ENCODE measurements at regions of chr12 and their contacts with region 1.

Region 1: DNA sequence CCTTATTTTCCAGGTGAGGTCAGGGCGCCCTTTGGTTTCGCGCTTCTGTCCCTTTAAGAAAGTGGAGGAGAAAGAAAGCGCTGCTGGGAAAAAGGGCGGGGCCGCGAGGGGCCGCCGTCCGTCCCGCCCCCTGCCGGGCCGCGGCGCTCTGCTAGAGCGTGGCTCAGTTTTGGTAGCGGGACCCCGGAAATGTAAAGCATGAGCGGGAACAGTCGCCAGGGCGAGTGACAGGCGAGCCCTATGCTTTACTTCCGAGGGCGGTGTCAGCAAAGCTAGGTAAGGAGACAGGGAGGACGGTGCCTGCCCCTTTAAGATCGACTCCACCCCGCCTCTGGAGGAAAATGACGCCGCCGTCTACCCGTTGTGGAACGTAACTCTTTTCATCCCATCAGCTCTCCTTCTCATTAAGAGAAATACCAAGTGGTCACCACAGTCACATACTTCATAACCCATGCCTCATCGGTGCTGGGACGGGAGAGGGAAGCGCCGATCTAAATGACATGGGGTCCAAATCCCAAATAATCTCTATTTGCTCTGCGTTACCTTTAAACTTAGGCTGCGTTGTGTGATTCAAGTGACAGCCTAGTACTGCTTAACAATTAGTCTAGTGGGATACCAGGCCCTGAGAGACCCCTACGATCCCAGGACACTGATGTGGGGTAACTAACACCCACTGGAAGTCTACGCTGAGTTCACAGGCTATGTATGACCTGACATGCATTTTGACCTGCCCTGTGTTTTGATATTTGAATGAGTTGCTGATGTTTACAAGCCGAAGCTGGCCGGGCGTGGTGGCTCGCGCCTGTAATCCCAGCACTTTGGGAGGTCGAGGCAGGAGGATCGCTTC is at the start of gene ETFBKMT:
- DNase-seq: peak; percentile 95
- H3K4me3 Mint-ChIP-seq: peak within 1 kb of the TSS; percentile 94
- H3K27ac Mint-ChIP-seq: peak within 1 kb of the TSS; percentile 97
- H3K4me1 Mint-ChIP-seq: peaks cover 11% of the 10 kb centered on the region
- H3K27me3 Mint-ChIP-seq: no peaks in the 10 kb centered on the region
- total RNA-seq, gene ETFBKMT: 0.62 and 0.69 TPM in 2 replicates

Region 2: DNA sequence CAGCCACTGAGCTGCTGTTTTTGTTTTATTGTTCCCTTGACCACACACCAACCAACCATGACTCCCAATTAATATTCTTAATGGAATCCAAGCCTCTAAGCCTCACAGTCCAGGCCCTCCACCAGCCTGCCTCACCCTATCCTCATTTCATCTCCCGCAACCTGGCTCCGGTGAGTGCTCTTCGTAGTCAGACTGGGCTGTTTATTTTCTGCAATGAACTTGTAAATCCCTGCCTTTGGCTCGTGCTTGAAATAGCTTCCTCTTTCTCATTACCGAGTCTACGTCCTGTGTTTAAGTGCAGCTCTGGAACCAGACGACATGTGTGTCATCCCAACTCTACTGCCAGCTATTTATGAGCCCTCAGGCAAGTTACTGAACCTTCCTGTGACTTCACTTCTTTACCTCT is 12.2 kb before region 1 on chr12:
- intact Hi-C with region 1: no loop called
- DNase-seq: no peak
- H3K4me3 Mint-ChIP-seq: no peak overlapping the region
- H3K27ac Mint-ChIP-seq: no peak overlapping the region
- H3K4me1 Mint-ChIP-seq: no peaks in the 10 kb centered on the region
- H3K27me3 Mint-ChIP-seq: peaks cover 2% of the 10 kb centered on the region

Region 3: GRCh38 chr12:31736472-31736871 is 77.2 kb after region 1 on chr12:
- intact Hi-C with region 1: no loop called
- DNase-seq: peak; percentile 67
- H3K4me3 Mint-ChIP-seq: no peak overlapping the region
- H3K27ac Mint-ChIP-seq: peak overlapping the region; percentile 84
- H3K4me1 Mint-ChIP-seq: peaks cover 54% of the 10 kb centered on the region
- H3K27me3 Mint-ChIP-seq: no peaks in the 10 kb centered on the region

Region 4: DNA sequence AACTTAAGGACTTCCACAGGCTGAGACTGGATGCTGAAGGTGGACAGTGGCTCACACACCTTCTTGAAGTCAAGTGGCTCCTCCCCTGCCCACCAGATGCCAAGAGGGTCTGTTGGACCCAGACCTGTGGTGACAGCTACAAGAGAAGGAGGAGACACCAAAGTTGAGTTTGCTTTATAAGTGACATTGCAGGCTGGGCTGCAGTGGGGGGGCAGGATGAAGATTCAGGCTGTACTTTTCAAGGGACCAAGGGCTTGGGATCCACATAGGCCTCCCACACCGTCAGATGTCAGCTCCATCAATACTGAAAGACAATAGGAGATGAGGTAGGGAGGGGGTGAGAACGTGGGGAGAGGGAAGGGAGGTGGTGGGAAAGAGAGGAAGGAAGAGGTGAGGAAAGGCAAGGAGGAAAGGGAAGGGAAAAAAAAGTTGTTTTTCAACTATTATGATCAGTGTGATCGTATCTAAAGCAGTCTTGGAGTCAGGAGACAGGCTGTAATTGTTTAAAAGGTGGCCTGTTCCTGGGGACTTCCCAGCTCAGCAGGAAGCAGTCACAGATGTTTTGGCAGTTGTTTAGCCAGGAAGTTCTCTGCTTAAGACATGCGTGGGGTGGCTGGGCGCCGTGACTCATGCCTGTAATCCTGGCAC is 215.8 kb after region 1 on chr12:
- intact Hi-C with region 1: loop called (anchors 1 kb)
- DNase-seq: peak; percentile 68
- H3K4me3 Mint-ChIP-seq: peak overlapping the region; percentile 80
- H3K27ac Mint-ChIP-seq: peak overlapping the region; percentile 100
- H3K4me1 Mint-ChIP-seq: peaks cover 30% of the 10 kb centered on the region
- H3K27me3 Mint-ChIP-seq: no peaks in the 10 kb centered on the region

Region 5: GRCh38 chr12:32106517-32107358 is 447.4 kb after region 1 on chr12 and contains the start of gene BICD1:
- intact Hi-C with region 1: loop called (anchors 1 kb)
- DNase-seq: peak; percentile 76
- H3K4me3 Mint-ChIP-seq: peak within 1 kb of the TSS; percentile 98
- H3K27ac Mint-ChIP-seq: peak within 1 kb of the TSS; percentile 87
- H3K4me1 Mint-ChIP-seq: peaks cover 36% of the 10 kb centered on the region
- H3K27me3 Mint-ChIP-seq: peaks cover 19% of the 10 kb centered on the region
- total RNA-seq, gene BICD1: 20.9 and 22.2 TPM in 2 replicates

Region 6: DNA sequence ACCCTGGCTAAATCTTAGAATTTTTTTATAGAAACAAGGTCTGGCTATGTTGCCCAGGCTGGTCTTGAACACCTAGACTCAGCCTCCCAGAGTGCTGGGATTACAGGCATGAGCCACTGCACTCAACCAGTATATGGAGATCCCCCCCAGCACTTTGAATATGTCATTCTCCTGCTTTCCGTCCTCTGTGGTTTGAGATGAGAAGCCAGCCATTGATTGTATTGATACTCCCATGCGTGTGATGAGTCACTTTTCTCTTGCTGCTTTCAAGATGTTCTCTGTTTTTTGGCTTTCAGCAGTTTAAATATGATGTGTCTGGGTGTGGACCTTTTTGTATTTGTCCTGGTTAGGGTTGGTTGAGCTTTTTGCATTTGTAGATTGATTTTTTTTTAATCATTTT is 944.5 kb after region 1 on chr12:
- intact Hi-C with region 1: loop called (anchors 5 kb)
- DNase-seq: peak; percentile 56
- H3K4me3 Mint-ChIP-seq: no peak overlapping the region
- H3K27ac Mint-ChIP-seq: peak overlapping the region; percentile 65
- H3K4me1 Mint-ChIP-seq: peaks cover 18% of the 10 kb centered on the region
- H3K27me3 Mint-ChIP-seq: no peaks in the 10 kb centered on the region

Region 7: GRCh38 chr12:33322519-33322918 is 1663.2 kb after region 1 on chr12:
- intact Hi-C with region 1: no loop called
- DNase-seq: no peak
- H3K4me3 Mint-ChIP-seq: no peak overlapping the region
- H3K27ac Mint-ChIP-seq: no peak overlapping the region
- H3K4me1 Mint-ChIP-seq: no peaks in the 10 kb centered on the region
- H3K27me3 Mint-ChIP-seq: no peaks in the 10 kb centered on the region

Measured in activated T-helper 1 cell treated with anti-CD3 and anti-CD28 coated beads, Interleukin-12 subunit alpha, Interleukin-12 subunit beta, Interleukin-2, Interleukin-4 antibody, amounts not matched to agents 30 ng/mL and 10 ng/mL and 1 ng/mL, durations not matched to agents 14 hours and 24 hours and 36 hours (primary cell).